ENCODE measurements at regions of chr5 and their contacts with region 1.

Region 1: DNA sequence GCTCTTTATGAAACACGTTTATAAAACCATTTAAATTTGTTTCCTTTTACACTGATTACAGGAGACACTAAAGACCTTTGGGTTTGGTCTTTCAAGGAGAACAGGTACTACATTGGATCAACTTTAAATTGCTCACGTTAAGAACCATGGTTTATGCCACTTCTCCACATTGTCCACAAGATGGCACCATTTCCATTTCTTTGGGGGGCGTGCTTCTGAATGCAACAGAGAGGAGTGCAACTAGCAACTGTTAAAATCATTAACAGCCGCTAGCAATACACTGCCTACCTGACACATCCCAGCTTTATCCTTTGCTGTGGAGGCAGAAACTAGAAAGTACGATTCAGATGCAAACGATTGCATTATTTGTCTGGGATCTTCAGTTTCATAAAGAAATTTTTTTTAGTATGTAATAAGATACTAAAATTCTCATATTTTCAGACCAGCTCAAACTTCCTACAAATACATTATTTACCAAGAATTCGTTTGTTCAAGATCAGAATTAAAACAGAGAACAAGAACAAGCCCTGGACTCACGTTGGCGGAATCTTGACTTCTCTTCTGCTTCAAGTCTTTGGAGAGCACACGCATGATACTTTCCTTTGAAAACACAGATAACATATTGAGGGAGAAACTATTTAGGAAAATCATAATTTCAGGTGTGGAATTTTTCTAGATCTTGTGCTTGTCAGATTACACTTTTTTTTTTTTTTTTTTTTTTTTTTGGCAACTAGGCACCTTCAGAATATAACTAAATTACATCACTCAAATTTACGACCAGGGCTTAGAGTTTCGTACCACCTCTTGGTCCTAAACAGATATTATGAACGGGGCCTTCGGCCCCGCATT is 702 bp downstream of the CDC20B start:
- DNase-seq: peak; percentile 87
- ATAC-seq: peak; percentile 55
- H3K4me3 ChIP-seq: peak overlapping the region; percentile 44 to 77 (median 57)
- H3K4me3 Mint-ChIP-seq: peak overlapping the region; percentile 91
- H3K27ac ChIP-seq: no peak overlapping the region
- H3K27ac Mint-ChIP-seq: peak overlapping the region; percentile 29
- H3K4me1 ChIP-seq: peaks cover 33% of the 10 kb centered on the region in 2 donors
- H3K4me1 Mint-ChIP-seq: peaks cover 31% of the 10 kb centered on the region
- H3K27me3 ChIP-seq: peaks cover 3 to 51% (median 39%) of the 10 kb centered on the region in 4 experiments
- H3K27me3 Mint-ChIP-seq: peaks cover 57% of the 10 kb centered on the region
- CTCF ChIP-seq: peak; percentile 89

Region 2: DNA sequence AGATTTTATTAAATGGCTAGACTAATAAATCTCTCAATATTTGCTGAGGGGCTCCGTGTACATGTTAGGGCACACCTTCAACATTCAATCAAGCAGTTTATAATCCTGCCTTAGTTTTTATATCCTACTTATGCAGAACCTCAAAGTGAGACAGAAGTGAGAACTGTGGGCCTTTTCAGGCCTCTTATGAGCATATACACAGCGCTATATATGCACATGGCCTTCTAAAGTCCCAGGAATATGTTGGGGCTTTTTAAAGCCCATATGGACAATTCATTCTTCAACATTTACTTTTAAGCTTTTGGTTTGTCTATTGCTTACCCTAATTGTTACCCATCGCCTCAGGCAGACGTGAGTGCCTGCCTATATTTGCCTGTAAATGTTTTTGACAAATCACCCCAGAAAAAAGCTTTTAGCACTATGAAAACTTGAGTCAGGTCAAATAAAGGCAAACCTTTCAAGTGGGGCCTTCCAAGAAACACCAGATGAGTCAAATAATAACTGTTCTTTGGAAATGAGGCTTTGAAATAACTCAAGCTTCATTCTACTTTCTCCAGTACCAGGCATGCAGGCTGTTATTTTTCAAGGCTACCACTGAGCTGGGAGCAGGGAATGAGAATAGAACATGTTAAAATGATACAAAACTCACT is 245.1 kb before region 1 on chr5:
- CTCF ChIA-PET with region 1: no interaction called
- POLR2A ChIA-PET with region 1: no interaction called
- intact Hi-C with region 1: no loop called
- DNase-seq: no peak
- ATAC-seq: no peak
- H3K4me3 ChIP-seq: no peak overlapping the region
- H3K4me3 Mint-ChIP-seq: no peak overlapping the region
- H3K27ac ChIP-seq: no peak overlapping the region
- H3K27ac Mint-ChIP-seq: no peak overlapping the region
- H3K4me1 ChIP-seq: no peaks in the 10 kb centered on the region
- H3K4me1 Mint-ChIP-seq: no peaks in the 10 kb centered on the region
- H3K27me3 ChIP-seq: peaks cover 0 to 9% (median 4%) of the 10 kb centered on the region in 4 experiments
- H3K27me3 Mint-ChIP-seq: peaks cover 7% of the 10 kb centered on the region
- CTCF ChIP-seq: no peak

Region 3: DNA sequence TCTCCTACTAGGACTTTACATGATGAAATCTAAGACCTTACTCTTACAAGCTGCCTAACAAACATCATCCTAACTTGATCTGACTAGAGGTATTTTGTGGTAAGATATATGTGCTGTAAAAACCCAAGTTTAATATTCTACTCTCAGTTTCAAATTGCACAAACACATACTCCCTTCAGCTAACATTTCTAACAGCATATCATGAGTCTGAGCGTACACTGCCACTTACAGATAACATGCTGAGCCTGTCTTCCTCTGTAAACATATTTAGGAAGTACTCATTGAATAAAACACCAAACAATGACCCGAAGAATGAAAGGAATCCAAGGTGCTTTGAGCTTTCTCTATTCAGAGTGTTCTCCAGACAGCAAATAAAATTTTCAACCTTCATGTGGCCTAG is 179.0 kb before region 1 on chr5:
- CTCF ChIA-PET with region 1: no interaction called
- POLR2A ChIA-PET with region 1: no interaction called
- intact Hi-C with region 1: no loop called
- DNase-seq: no peak
- ATAC-seq: no peak
- H3K4me3 ChIP-seq: no peak overlapping the region
- H3K4me3 Mint-ChIP-seq: no peak overlapping the region
- H3K27ac ChIP-seq: no peak overlapping the region
- H3K27ac Mint-ChIP-seq: no peak overlapping the region
- H3K4me1 ChIP-seq: no peaks in the 10 kb centered on the region
- H3K4me1 Mint-ChIP-seq: no peaks in the 10 kb centered on the region
- H3K27me3 ChIP-seq: no peaks in the 10 kb centered on the region
- H3K27me3 Mint-ChIP-seq: peaks cover 6% of the 10 kb centered on the region
- CTCF ChIP-seq: no peak

Region 4: DNA sequence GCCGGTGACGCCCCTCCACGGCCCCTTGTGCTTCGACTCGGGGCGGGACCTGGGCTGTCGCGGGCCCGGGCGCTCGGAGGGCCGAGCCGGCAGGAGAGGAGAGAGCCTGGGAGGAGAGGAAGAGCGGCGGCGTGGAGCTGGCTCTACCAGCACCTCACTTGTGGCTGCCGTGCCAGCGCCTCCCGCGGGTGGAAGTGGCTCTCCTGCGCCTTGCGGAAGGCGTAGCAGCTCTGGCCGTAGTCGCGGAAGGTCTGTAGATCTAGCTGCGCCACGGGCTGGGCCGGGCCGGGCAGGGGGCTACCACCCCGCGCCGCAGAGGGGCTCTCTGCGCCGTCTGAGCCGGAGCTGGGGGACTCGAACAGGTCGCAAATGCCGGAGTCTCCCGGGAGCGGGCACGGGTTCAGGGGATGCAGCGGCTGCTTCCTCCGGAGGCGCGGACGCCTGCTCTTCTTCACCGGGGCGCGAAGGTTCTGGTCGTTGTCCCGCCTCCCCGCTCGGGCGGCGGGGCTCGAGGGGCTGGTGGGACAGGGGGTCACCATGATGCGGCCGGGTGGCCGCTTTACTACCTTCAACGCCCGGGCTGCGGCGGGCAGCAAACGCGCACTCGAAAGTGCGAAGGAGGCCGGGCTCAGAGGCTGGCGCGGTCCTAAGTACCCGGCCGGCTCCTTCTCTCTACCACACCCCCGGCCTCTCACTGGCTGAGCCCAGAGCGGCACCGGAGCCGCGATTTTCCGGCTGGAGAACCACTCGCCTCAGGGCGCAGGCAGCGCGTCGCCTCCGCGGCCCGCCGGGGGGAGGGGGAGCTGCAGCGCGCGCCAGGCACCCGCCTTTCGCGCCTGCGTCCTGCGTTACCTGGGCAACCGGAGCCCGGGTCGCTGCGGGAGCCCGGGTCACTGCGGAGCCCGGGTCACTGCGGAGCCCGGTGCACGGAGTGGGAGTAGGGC is 61.0 kb after region 1 on chr5 and contains the start of gene CCNO:
- CTCF ChIA-PET with region 1: interaction called, 6 read pairs
- POLR2A ChIA-PET with region 1: interaction called, 10 read pairs
- intact Hi-C with region 1: loop called (anchors 2 kb)
- DNase-seq: peak; percentile 77
- ATAC-seq: peak; percentile 63
- H3K4me3 ChIP-seq: peak within 1 kb of the TSS; percentile 38 to 81 (median 55)
- H3K4me3 Mint-ChIP-seq: peak within 1 kb of the TSS; percentile 91
- H3K27ac ChIP-seq: no peak within 1 kb of the TSS
- H3K27ac Mint-ChIP-seq: peak within 1 kb of the TSS; percentile 34
- H3K4me1 ChIP-seq: peaks cover 37 to 43% of the 10 kb centered on the region in 2 donors
- H3K4me1 Mint-ChIP-seq: peaks cover 30% of the 10 kb centered on the region
- H3K27me3 ChIP-seq: peaks cover 4 to 75% (median 54%) of the 10 kb centered on the region in 4 experiments
- H3K27me3 Mint-ChIP-seq: peaks cover 66% of the 10 kb centered on the region
- CTCF ChIP-seq: no peak
- total RNA-seq, gene CCNO: not detected in 2 replicates

Region 5: GRCh38 chr5:55254802-55255201 is 82.5 kb after region 1 on chr5:
- CTCF ChIA-PET with region 1: no interaction called
- POLR2A ChIA-PET with region 1: no interaction called
- intact Hi-C with region 1: no loop called
- DNase-seq: no peak
- ATAC-seq: no peak
- H3K4me3 ChIP-seq: no peak overlapping the region
- H3K4me3 Mint-ChIP-seq: no peak overlapping the region
- H3K27ac ChIP-seq: no peak overlapping the region
- H3K27ac Mint-ChIP-seq: no peak overlapping the region
- H3K4me1 ChIP-seq: no peaks in the 10 kb centered on the region
- H3K4me1 Mint-ChIP-seq: no peaks in the 10 kb centered on the region
- H3K27me3 ChIP-seq: no peaks in the 10 kb centered on the region
- H3K27me3 Mint-ChIP-seq: no peaks in the 10 kb centered on the region
- CTCF ChIP-seq: no peak

Region 6: DNA sequence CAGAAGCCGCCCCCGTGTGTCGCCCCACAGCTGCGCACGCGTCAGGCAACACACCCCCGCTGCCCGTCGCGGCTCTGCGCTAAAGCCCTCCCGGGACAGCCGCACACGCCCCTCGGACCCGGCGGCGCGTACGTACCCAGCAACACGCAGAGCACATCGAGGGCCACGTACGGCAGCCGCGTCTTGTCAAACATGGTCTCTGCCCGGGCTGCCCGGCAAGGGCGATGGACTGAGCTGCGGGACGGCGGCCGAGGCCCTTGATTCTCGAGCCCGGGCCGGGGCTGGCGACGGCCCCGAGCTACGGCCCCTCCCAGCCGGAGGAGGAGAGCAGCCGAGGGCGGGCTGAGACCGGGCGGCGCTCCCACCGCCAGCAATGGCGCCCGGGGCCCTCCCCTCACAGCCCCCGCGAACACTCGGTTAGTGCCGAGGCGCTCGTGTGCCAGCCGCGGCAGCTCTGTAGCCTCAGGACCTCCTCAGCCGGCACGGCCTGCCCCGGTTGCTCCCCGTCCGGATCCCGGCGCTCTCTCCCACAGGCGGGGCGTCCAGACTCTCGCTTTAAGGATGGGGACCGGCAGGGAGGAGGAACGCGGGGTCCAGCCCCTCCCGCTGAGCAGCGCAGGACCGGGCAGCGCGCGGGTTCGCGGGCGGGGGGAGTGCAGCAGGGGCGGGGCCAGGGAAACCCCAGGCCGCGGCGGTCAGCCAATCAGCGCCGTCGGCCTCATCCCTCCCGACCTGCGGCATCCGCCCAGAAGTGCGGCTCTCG is 362.3 kb after region 1 on chr5 and contains the start of gene PLPP1:
- CTCF ChIA-PET with region 1: no interaction called
- POLR2A ChIA-PET with region 1: no interaction called
- intact Hi-C with region 1: loop called (anchors 1 kb)
- DNase-seq: peak; percentile 92
- ATAC-seq: peak; percentile 78
- H3K4me3 ChIP-seq: peak within 1 kb of the TSS; percentile 71 to 93 (median 89)
- H3K4me3 Mint-ChIP-seq: peak within 1 kb of the TSS; percentile 98
- H3K27ac ChIP-seq: peak within 1 kb of the TSS; percentile 88 to 92
- H3K27ac Mint-ChIP-seq: peak within 1 kb of the TSS; percentile 96
- H3K4me1 ChIP-seq: peaks cover 18 to 23% of the 10 kb centered on the region in 2 donors
- H3K4me1 Mint-ChIP-seq: peaks cover 24% of the 10 kb centered on the region
- H3K27me3 ChIP-seq: no peaks in the 10 kb centered on the region
- H3K27me3 Mint-ChIP-seq: no peaks in the 10 kb centered on the region
- CTCF ChIP-seq: no peak
- total RNA-seq, gene PLPP1: 8.8 and 11.2 TPM in 2 replicates

Region 7: GRCh38 chr5:55711968-55712859 is 539.9 kb after region 1 on chr5 and contains the start of gene SLC38A9:
- CTCF ChIA-PET with region 1: no interaction called
- POLR2A ChIA-PET with region 1: no interaction called
- intact Hi-C with region 1: loop called (anchors 2 kb)
- DNase-seq: peak; percentile 93
- ATAC-seq: peak; percentile 100
- H3K4me3 ChIP-seq: peak within 1 kb of the TSS; percentile 80 to 96 (median 94)
- H3K4me3 Mint-ChIP-seq: peak within 1 kb of the TSS; percentile 100
- H3K27ac ChIP-seq: peak within 1 kb of the TSS; percentile 49 to 74
- H3K27ac Mint-ChIP-seq: peak within 1 kb of the TSS; percentile 93
- H3K4me1 ChIP-seq: peaks cover 11 to 19% of the 10 kb centered on the region in 2 donors
- H3K4me1 Mint-ChIP-seq: peaks cover 19% of the 10 kb centered on the region
- H3K27me3 ChIP-seq: no peaks in the 10 kb centered on the region
- H3K27me3 Mint-ChIP-seq: no peaks in the 10 kb centered on the region
- CTCF ChIP-seq: no peak
- total RNA-seq, gene SLC38A9: 36.3 and 43.5 TPM in 2 replicates

Region 8: DNA sequence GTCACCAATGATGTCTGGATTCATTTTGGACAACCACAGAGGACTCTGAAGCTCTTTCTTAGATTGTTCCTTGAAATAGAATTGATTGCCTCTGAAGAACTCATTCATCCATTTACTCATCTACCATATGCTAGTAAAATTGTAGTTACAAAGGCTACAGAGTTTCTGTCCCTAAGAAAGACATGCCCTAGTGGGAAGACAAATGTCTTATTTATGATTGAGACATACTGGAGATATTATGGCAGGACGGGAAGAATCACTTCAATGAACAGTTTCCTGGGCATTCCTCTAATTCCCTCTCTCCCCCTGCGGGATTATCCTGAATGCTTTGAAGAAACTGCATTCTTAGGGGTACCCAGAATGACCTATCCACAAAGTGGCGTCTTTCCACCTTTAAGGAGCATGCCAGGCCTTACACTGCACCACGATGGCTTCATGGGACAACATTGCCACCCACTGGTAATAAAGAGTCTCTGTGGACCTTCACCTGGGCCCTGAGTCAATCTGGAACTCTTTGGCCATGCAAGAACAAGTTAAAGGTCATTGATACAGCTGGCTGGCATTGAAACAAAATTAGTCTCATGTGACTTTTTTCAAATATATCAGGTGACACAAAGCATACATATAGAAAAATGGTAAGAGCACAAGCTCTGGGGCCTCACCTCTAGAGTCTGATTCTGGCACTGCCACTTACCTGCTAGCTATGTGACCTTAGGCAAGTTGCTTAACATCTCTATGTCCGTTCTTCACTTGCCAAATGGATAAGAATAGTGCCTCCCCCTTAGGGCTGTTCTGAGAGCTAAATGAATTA is 1028.8 kb after region 1 on chr5:
- CTCF ChIA-PET with region 1: interaction called, 8 read pairs
- POLR2A ChIA-PET with region 1: no interaction called
- intact Hi-C with region 1: loop called (anchors 2 kb)
- DNase-seq: peak; percentile 55
- ATAC-seq: peak; percentile 86
- H3K4me3 ChIP-seq: no peak overlapping the region
- H3K4me3 Mint-ChIP-seq: no peak overlapping the region
- H3K27ac ChIP-seq: no peak overlapping the region
- H3K27ac Mint-ChIP-seq: no peak overlapping the region
- H3K4me1 ChIP-seq: no peaks in the 10 kb centered on the region
- H3K4me1 Mint-ChIP-seq: no peaks in the 10 kb centered on the region
- H3K27me3 ChIP-seq: no peaks in the 10 kb centered on the region
- H3K27me3 Mint-ChIP-seq: no peaks in the 10 kb centered on the region
- CTCF ChIP-seq: peak; percentile 43